ENCODE measurements at regions of chr4 and their contacts with region 1.

Region 1: GRCh38 chr4:105520817-105521790 is 31.3 kb upstream of the ARHGEF38 start:
- DNase-seq: peak; percentile 21 to 34
- ATAC-seq: peak; percentile 80 to 86; a peak in 5 of 6 replicates
- H3K4me3 ChIP-seq: no peak overlapping the region
- H3K27ac ChIP-seq: no peak overlapping the region
- H3K4me1 ChIP-seq: no peaks in the 10 kb centered on the region
- CTCF ChIP-seq: peak; percentile 68
- EP300 ChIP-seq: no peak
- POLR2A ChIP-seq: no peak
- RAD21 ChIP-seq: peak; percentile 62 to 69

Region 2: GRCh38 chr4:105666693-105667092 is 145.6 kb after region 1 on chr4:
- CTCF ChIA-PET with region 1: interaction called, 12 read pairs
- POLR2A ChIA-PET with region 1: no interaction called
- DNase-seq: peak in 1 of 2 experiments; percentile 22
- ATAC-seq: peak; percentile 68; a peak in 4 of 6 replicates
- H3K4me3 ChIP-seq: no peak overlapping the region
- H3K27ac ChIP-seq: no peak overlapping the region
- H3K4me1 ChIP-seq: no peaks in the 10 kb centered on the region
- CTCF ChIP-seq: peak; percentile 32
- EP300 ChIP-seq: no peak
- POLR2A ChIP-seq: no peak
- RAD21 ChIP-seq: peak; percentile 41 to 43; a peak in 3 of 5 replicates

Measured in A549 (cell line).